PC-3 (cell line): ENCODE measurements at regions of chr10 and their contacts with region 1.

Region 1: GRCh38 chr10:58820883-58821846 is 308.5 kb downstream of the BICC1 start:
- DNase-seq: peak; percentile 100
- ATAC-seq: peak; percentile 91
- H3K4me3 ChIP-seq: peak overlapping the region; percentile 21
- H3K27ac ChIP-seq: peak overlapping the region; percentile 81
- H3K4me1 ChIP-seq: peaks cover 49% of the 10 kb centered on the region
- H3K27me3 ChIP-seq: no peaks in the 10 kb centered on the region
- CTCF ChIP-seq: no peak

Region 2: DNA sequence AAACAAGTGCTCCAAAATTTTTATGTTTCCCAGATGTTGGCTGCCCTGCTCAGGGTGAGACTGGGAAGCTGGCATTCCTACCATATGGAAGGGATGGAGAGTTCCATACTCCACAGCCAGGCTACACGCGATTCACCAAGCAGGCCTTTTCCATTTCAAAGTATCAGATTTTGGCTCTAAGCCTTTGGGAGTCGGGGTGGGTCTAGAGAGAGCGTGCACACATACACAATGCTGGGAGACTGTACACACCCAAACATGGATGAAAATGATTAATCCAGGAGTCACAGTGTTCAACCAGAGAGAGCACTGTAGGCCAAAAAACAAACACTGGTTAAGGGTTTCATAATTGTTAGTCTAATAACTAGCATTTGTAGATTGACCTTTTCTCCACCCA is 13.5 kb before region 1 on chr10:
- CTCF ChIA-PET with region 1: no interaction called
- POLR2A ChIA-PET with region 1: interaction called, 4 read pairs
- intact Hi-C with region 1: loop called (anchors 1 kb)
- DNase-seq: peak; percentile 98
- ATAC-seq: peak; percentile 90
- H3K4me3 ChIP-seq: peak overlapping the region; percentile 36
- H3K27ac ChIP-seq: peak overlapping the region; percentile 93
- H3K4me1 ChIP-seq: peaks cover 57% of the 10 kb centered on the region
- H3K27me3 ChIP-seq: no peaks in the 10 kb centered on the region
- CTCF ChIP-seq: no peak

Region 3: DNA sequence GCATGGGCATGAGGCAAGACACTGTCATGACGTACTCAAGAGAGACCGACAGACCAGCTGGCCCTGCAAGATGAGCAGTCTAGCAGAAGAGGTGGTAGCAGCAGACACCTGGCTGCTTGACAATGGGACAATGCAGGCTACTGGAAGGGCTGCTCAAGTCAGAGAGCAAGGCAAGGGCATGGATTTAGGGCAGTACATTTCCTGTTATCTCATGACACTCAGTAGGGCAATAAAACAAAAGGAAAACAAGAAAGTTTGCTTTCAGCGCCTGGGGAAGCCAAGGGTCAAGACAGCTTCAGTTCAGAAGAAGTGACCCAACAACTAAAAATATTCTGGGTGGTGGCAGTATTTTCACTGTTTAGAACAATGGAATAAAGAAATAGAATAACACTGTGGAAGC is 23.5 kb after region 1 on chr10:
- CTCF ChIA-PET with region 1: no interaction called
- POLR2A ChIA-PET with region 1: no interaction called
- intact Hi-C with region 1: no loop called
- DNase-seq: no peak
- ATAC-seq: no peak
- H3K4me3 ChIP-seq: no peak overlapping the region
- H3K27ac ChIP-seq: no peak overlapping the region
- H3K4me1 ChIP-seq: no peaks in the 10 kb centered on the region
- H3K27me3 ChIP-seq: no peaks in the 10 kb centered on the region
- CTCF ChIP-seq: no peak

Region 4: GRCh38 chr10:58856508-58857240 is 35.5 kb after region 1 on chr10:
- CTCF ChIA-PET with region 1: no interaction called
- POLR2A ChIA-PET with region 1: no interaction called
- intact Hi-C with region 1: loop called (anchors 1 kb)
- DNase-seq: peak; percentile 97
- ATAC-seq: peak; percentile 100
- H3K4me3 ChIP-seq: no peak overlapping the region
- H3K27ac ChIP-seq: no peak overlapping the region
- H3K4me1 ChIP-seq: peaks cover 14% of the 10 kb centered on the region
- H3K27me3 ChIP-seq: no peaks in the 10 kb centered on the region
- CTCF ChIP-seq: no peak

Region 5: GRCh38 chr10:58885146-58885545 is 64.0 kb after region 1 on chr10:
- CTCF ChIA-PET with region 1: no interaction called
- POLR2A ChIA-PET with region 1: no interaction called
- intact Hi-C with region 1: no loop called
- DNase-seq: no peak
- ATAC-seq: no peak
- H3K4me3 ChIP-seq: no peak overlapping the region
- H3K27ac ChIP-seq: no peak overlapping the region
- H3K4me1 ChIP-seq: peaks cover under 1% of the 10 kb centered on the region; the same call in 1 of the 2 replicates
- H3K27me3 ChIP-seq: no peaks in the 10 kb centered on the region
- CTCF ChIP-seq: no peak

Region 6: DNA sequence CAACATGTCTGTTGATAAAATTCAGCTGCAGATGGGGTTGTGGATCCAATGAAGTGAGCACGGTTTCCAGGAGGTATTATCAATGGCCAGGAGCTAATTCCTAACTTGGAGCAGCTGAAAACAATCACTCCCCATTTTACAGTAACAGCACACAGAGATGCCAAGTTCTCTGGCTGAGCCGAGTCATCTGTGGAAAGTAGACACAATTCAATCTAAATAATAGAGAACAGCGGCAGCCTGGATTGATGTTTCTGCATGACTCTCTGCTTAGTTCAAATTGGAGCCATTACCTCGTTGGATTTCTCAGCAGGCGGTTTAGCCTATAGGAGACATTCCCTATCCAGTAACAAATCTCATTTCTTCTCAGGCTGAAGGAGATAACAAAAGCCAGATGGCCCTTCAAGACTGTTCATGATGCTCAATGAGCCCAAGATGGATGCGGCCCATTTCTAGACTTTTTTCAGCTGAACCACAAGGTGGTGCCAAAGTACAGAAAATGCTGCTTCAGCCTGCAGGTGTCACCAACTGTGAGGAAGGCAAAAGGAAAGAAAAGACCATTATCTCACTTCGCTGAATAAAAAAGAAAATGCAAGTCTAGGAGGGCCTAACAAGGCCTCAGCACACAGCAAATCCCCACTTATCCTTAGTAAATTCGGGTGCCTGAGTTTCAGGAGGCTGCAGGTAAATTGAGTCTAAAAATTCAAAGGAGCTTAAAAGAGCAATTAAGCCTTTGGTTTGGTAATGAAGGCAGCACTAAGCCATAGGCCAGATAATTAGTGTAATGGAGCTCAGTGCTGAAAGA is 804.8 kb after region 1 on chr10:
- CTCF ChIA-PET with region 1: no interaction called
- POLR2A ChIA-PET with region 1: no interaction called
- intact Hi-C with region 1: no loop called
- DNase-seq: peak; percentile 95
- ATAC-seq: peak; percentile 82
- H3K4me3 ChIP-seq: peak overlapping the region; percentile 8; the same call in 1 of the 2 replicates
- H3K27ac ChIP-seq: no peak overlapping the region
- H3K4me1 ChIP-seq: peaks cover 35% of the 10 kb centered on the region
- H3K27me3 ChIP-seq: no peaks in the 10 kb centered on the region
- CTCF ChIP-seq: peak; percentile 99